Activated naive CD4-positive, alpha-beta T cell treated with anti-CD3 and anti-CD28 coated beads for 36 hours (primary cell): ENCODE measurements at regions of chr15 and their contacts with region 1.

Region 1: DNA sequence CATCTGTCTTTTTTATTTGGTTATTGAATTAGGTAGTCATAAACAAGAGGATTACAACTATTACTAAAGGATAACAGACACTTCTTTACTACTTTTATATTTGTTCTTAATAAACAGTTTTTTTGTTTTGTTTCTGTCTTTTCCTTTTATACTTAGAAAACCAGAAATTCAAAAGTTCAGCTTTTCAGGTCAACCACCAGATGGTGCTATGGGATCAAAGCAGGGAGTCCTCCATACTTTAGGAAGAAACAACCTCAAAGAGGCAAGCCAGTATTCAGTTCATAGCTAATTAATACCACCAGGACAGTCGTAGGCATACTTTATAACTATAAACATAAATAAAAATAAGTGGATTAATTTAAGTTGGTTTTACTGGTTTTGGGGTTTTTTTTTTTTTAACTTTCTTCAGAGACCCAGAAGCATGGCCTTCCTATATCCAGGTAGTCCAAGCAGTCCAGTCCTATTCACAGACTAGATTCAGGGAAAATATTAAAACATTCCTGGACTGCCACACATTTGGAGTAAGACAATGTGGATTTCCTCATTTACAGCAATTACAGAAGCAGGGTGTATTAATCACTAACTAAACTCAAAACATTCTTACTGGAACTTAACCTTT is 16.0 kb upstream of the EID1 start:
- DNase-seq: peak; percentile 61
- H3K4me3 Mint-ChIP-seq: no peak overlapping the region
- H3K27ac Mint-ChIP-seq: no peak overlapping the region
- H3K4me1 Mint-ChIP-seq: peaks cover 9% of the 10 kb centered on the region
- H3K27me3 Mint-ChIP-seq: peaks cover 2% of the 10 kb centered on the region

Region 2: GRCh38 chr15:47066392-47066791 is 1795.5 kb before region 1 on chr15:
- CTCF ChIA-PET with region 1: no interaction called
- intact Hi-C with region 1: no loop called
- DNase-seq: no peak
- H3K4me3 Mint-ChIP-seq: no peak overlapping the region
- H3K27ac Mint-ChIP-seq: no peak overlapping the region
- H3K4me1 Mint-ChIP-seq: no peaks in the 10 kb centered on the region
- H3K27me3 Mint-ChIP-seq: no peaks in the 10 kb centered on the region

Region 3: GRCh38 chr15:48845123-48845522 is 16.8 kb before region 1 on chr15:
- CTCF ChIA-PET with region 1: no interaction called
- intact Hi-C with region 1: no loop called
- DNase-seq: no peak
- H3K4me3 Mint-ChIP-seq: no peak overlapping the region
- H3K27ac Mint-ChIP-seq: no peak overlapping the region
- H3K4me1 Mint-ChIP-seq: no peaks in the 10 kb centered on the region
- H3K27me3 Mint-ChIP-seq: no peaks in the 10 kb centered on the region

Region 4: GRCh38 chr15:48963524-48964113 is 101.7 kb after region 1 on chr15 and contains the start of gene SHC4:
- CTCF ChIA-PET with region 1: interaction called, 17 read pairs
- intact Hi-C with region 1: loop called (anchors 1 kb)
- DNase-seq: peak; percentile 14
- H3K4me3 Mint-ChIP-seq: peak within 1 kb of the TSS; percentile 69
- H3K27ac Mint-ChIP-seq: no peak within 1 kb of the TSS
- H3K4me1 Mint-ChIP-seq: peaks cover 31% of the 10 kb centered on the region
- H3K27me3 Mint-ChIP-seq: peaks cover 52% of the 10 kb centered on the region
- total RNA-seq, gene SHC4: 0.21 to 0.25 TPM

Region 5: GRCh38 chr15:49145651-49146609 is 284.0 kb after region 1 on chr15:
- CTCF ChIA-PET with region 1: interaction called, 16 read pairs
- intact Hi-C with region 1: loop called (anchors 1 kb)
- DNase-seq: peak; percentile 52
- H3K4me3 Mint-ChIP-seq: no peak overlapping the region
- H3K27ac Mint-ChIP-seq: no peak overlapping the region
- H3K4me1 Mint-ChIP-seq: peaks cover 43% of the 10 kb centered on the region
- H3K27me3 Mint-ChIP-seq: no peaks in the 10 kb centered on the region

Region 6: DNA sequence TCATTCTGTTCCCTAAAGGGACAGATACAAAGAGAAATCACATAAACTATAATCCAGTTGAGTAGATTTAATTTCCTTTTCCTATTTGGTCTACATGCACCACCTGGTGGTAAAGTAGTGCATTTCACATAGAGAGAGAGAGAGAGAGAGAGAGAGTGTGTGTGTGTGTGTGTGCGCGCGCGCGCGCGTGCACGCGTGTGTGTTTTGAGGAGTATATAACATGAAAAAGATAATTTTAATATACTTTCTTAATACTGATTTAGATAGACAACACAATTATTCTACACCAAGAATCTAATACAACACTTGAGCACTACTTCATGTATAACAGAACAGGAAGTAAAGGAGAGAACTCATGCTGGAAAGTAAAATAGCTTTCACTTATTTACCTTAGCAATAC is 560.1 kb after region 1 on chr15:
- CTCF ChIA-PET with region 1: interaction called, 31 read pairs
- intact Hi-C with region 1: loop called (anchors 1 kb)
- DNase-seq: peak; percentile 25
- H3K4me3 Mint-ChIP-seq: no peak overlapping the region
- H3K27ac Mint-ChIP-seq: no peak overlapping the region
- H3K4me1 Mint-ChIP-seq: peaks cover 4% of the 10 kb centered on the region
- H3K27me3 Mint-ChIP-seq: no peaks in the 10 kb centered on the region

Region 7: GRCh38 chr15:50051803-50052419 is 1190.0 kb after region 1 on chr15:
- CTCF ChIA-PET with region 1: no interaction called
- intact Hi-C with region 1: loop called (anchors 5 kb)
- DNase-seq: peak; percentile 58
- H3K4me3 Mint-ChIP-seq: no peak overlapping the region
- H3K27ac Mint-ChIP-seq: no peak overlapping the region
- H3K4me1 Mint-ChIP-seq: peaks cover 2% of the 10 kb centered on the region
- H3K27me3 Mint-ChIP-seq: peaks cover 15% of the 10 kb centered on the region